ENCODE measurements at regions of chr12 and their contacts with region 1.

Region 1: GRCh38 chr12:27627123-27627835 is 69.0 kb upstream of the REP15 start:
- DNase-seq: peak; percentile 83
- H3K4me3 Mint-ChIP-seq: peak overlapping the region; percentile 57
- H3K27ac Mint-ChIP-seq: peak overlapping the region; percentile 89
- H3K4me1 Mint-ChIP-seq: peaks cover 33% of the 10 kb centered on the region
- H3K27me3 Mint-ChIP-seq: no peaks in the 10 kb centered on the region
- CTCF ChIP-seq: no peak

Region 2: DNA sequence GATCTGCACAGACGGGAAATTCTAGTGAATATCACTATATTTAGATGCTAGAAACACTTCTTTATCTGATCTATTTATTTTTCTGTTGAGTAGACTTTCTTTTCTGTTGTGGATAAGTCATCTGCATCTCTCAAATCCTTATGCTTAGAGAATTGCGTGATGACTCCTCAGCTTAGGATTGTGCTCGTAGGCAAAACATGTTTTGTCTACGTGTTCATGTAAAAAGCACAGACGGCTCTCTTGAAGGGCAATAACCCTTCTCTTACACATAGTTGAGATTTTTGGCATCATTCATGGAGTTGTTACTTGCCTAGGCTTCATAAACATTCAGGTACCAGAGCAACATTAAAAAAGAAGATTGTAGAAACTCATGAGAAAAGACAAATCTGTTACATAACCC is 84.7 kb before region 1 on chr12:
- CTCF ChIA-PET with region 1: no interaction called
- POLR2A ChIA-PET with region 1: interaction called, 27 read pairs
- intact Hi-C with region 1: no loop called
- DNase-seq: peak; percentile 80
- H3K4me3 Mint-ChIP-seq: peak overlapping the region; percentile 46
- H3K27ac Mint-ChIP-seq: peak overlapping the region; percentile 99
- H3K4me1 Mint-ChIP-seq: peaks cover 40% of the 10 kb centered on the region
- H3K27me3 Mint-ChIP-seq: no peaks in the 10 kb centered on the region
- CTCF ChIP-seq: no peak

Region 3: DNA sequence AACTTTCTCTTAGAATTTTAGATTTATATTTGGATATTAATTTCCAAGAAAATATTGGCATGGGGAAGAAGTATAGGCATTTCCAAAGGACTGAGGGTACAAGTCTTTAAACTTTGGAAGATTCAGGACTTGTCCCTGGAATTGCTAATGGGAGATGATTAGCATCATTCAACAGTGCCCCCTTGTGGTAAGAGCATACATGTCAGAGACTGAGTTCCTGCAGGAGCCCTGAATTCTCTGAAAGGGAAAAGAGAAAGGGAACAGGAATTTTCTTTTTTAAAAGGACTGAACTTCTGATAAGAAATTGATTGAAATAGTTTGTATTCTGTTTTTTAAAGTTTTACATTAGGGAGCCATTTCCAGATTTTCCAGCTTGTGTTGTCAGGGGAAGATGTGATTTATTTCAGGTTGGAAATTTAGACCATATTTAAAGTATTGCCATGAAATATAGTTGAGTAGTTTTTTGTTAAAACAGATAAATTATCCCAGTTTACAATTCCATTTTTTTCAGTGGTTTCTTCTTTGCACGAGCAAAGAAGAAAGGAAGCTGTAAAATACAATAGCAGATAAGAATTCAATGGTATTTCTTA is 25.0 kb after region 1 on chr12:
- CTCF ChIA-PET with region 1: no interaction called
- POLR2A ChIA-PET with region 1: no interaction called
- intact Hi-C with region 1: no loop called
- DNase-seq: peak; percentile 87
- H3K4me3 Mint-ChIP-seq: no peak overlapping the region
- H3K27ac Mint-ChIP-seq: no peak overlapping the region
- H3K4me1 Mint-ChIP-seq: no peaks in the 10 kb centered on the region
- H3K27me3 Mint-ChIP-seq: no peaks in the 10 kb centered on the region
- CTCF ChIP-seq: peak; percentile 82

Region 4: GRCh38 chr12:27723212-27723611 is 95.9 kb after region 1 on chr12:
- CTCF ChIA-PET with region 1: no interaction called
- POLR2A ChIA-PET with region 1: no interaction called
- intact Hi-C with region 1: no loop called
- DNase-seq: no peak
- H3K4me3 Mint-ChIP-seq: no peak overlapping the region
- H3K27ac Mint-ChIP-seq: peak overlapping the region; percentile 23
- H3K4me1 Mint-ChIP-seq: no peaks in the 10 kb centered on the region
- H3K27me3 Mint-ChIP-seq: no peaks in the 10 kb centered on the region
- CTCF ChIP-seq: no peak